ENCODE measurements at regions of chr3 and their contacts with region 1.

Region 1: GRCh38 chr3:78165876-78166275 is 1126.0 kb downstream of the ROBO2 start:
- DNase-seq: no peak
- ATAC-seq: no peak

Region 2: GRCh38 chr3:78050276-78051065 is 115.4 kb before region 1 on chr3:
- intact Hi-C with region 1: loop called (anchors 10 kb)
- DNase-seq: no peak
- ATAC-seq: no peak

Region 3: GRCh38 chr3:78368581-78369345 is 202.9 kb after region 1 on chr3:
- intact Hi-C with region 1: no loop called
- DNase-seq: no peak
- ATAC-seq: no peak